Activated CD4-positive, alpha-beta T cell treated with anti-CD3 and anti-CD28 coated beads for 36 hours (primary cell): ENCODE measurements at regions of chr16 and their contacts with region 1.

Region 1: DNA sequence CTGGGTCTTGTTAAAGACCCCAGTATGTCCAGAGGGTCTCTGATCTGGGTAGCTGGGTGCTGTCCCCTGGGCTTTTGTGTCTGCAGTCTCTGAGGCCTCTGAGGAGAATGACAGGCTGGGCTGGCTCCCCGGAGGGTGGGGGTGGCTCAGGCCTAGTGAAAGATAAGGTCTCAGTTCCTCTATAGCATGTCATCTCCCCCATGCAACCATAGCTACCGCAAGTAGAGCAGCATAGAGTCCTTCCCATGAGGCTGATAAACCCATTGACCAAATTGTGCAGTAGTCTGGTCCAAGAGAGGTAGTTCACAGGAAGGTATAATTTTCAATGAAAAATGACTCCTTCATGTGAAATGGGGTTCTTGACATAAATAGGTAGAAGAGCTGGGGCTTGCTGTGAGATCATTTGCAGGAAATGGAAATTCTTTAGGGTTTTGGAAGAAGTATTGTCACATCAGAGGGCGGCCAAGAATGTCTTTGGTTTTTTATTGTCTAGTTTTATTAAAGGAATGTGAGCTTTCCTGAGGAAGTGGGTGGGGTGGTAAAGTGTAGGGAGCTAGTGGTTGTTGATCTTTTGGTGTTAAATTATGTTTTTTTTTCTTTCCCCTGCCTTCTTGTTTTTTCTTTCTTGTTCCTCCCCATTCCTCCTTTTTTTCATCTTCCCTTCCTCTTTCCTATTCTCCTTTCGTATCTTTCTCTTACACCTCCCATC is 21.0 kb downstream of the SLC7A6OS start:
- DNase-seq: peak; percentile 79
- ATAC-seq: peak; percentile 77
- H3K4me3 Mint-ChIP-seq: peak overlapping the region; percentile 0
- H3K27ac Mint-ChIP-seq: peak overlapping the region; percentile 96
- H3K4me1 Mint-ChIP-seq: peaks cover 83% of the 10 kb centered on the region
- H3K27me3 Mint-ChIP-seq: no peaks in the 10 kb centered on the region

Region 2: GRCh38 chr16:68259007-68259825 is 30.6 kb before region 1 on chr16:
- CTCF ChIA-PET with region 1: interaction called, 67 read pairs
- POLR2A ChIA-PET with region 1: interaction called, 14 read pairs
- intact Hi-C with region 1: loop called (anchors 1 to 2 kb)
- DNase-seq: no peak
- ATAC-seq: no peak
- H3K4me3 Mint-ChIP-seq: no peak overlapping the region
- H3K27ac Mint-ChIP-seq: no peak overlapping the region
- H3K4me1 Mint-ChIP-seq: peaks cover 20% of the 10 kb centered on the region
- H3K27me3 Mint-ChIP-seq: no peaks in the 10 kb centered on the region

Region 3: GRCh38 chr16:68275611-68276191 is 14.1 kb before region 1 on chr16:
- CTCF ChIA-PET with region 1: interaction called, 26 read pairs
- POLR2A ChIA-PET with region 1: interaction called, 4 read pairs
- intact Hi-C with region 1: loop called (anchors 1 to 2 kb)
- DNase-seq: peak; percentile 62
- ATAC-seq: peak; percentile 75
- H3K4me3 Mint-ChIP-seq: peak overlapping the region; percentile 48
- H3K27ac Mint-ChIP-seq: peak overlapping the region; percentile 97
- H3K4me1 Mint-ChIP-seq: peaks cover 76% of the 10 kb centered on the region
- H3K27me3 Mint-ChIP-seq: no peaks in the 10 kb centered on the region

Region 4: GRCh38 chr16:68310761-68311511 is 21.2 kb after region 1 on chr16 and contains the starts of genes PRMT7 and SLC7A6OS:
- CTCF ChIA-PET with region 1: interaction called, 32 read pairs
- POLR2A ChIA-PET with region 1: interaction called, 6 read pairs
- intact Hi-C with region 1: loop called in 1 of 2 experiments (anchors 1 kb)
- DNase-seq: peak; percentile 97
- ATAC-seq: peak; percentile 99
- H3K4me3 Mint-ChIP-seq: peak within 1 kb of the TSS; percentile 90
- H3K27ac Mint-ChIP-seq: peak within 1 kb of the TSS; percentile 92
- H3K4me1 Mint-ChIP-seq: peaks cover 42% of the 10 kb centered on the region
- H3K27me3 Mint-ChIP-seq: no peaks in the 10 kb centered on the region
- total RNA-seq, gene PRMT7: 62.7 to 70.7 TPM
- total RNA-seq, gene SLC7A6OS: 17.4 to 21.7 TPM

Region 5: DNA sequence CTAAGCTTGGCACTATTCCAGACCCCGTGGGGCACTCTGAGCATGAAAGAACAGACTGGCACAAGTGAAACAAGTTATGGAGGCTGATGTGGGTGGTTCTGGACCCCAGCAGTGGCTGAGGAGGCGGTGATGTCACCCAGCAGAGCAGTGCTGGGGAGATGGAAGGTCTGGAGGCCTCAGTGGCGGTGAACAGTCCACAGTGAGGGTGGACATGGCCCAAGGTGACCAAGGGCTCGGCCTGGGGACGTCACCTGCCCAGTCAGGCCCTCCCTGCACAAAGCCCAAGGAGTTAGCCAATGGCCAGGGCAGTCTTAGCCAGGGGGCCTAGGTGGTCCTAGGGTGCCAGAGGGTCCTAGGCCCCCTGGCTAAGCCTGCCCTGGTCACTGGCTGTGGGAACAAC is 134.0 kb after region 1 on chr16:
- CTCF ChIA-PET with region 1: no interaction called
- POLR2A ChIA-PET with region 1: no interaction called
- intact Hi-C with region 1: no loop called
- DNase-seq: no peak
- ATAC-seq: no peak
- H3K4me3 Mint-ChIP-seq: no peak overlapping the region
- H3K27ac Mint-ChIP-seq: no peak overlapping the region
- H3K4me1 Mint-ChIP-seq: peaks cover 45% of the 10 kb centered on the region
- H3K27me3 Mint-ChIP-seq: no peaks in the 10 kb centered on the region